GM12878 (cell line): ENCODE measurements at regions of chr15 and their contacts with region 1.

Region 1: GRCh38 chr15:59329570-59330350 is 42.9 kb downstream of the MYO1E start:
- DNase-seq: no peak
- ATAC-seq: no peak; the same call in 2 of the 3 replicates
- H3K4me3 ChIP-seq: no peak overlapping the region
- H3K27ac ChIP-seq: peak overlapping the region; percentile 48; the same call in 1 of the 2 replicates
- H3K4me1 ChIP-seq: peaks cover 80% of the 10 kb centered on the region
- H3K27me3 ChIP-seq: no peaks in the 10 kb centered on the region
- CTCF ChIP-seq: no peak
- EP300 ChIP-seq: no peak
- POLR2A ChIP-seq: no peak
- RAD21 ChIP-seq: no peak

Region 2: DNA sequence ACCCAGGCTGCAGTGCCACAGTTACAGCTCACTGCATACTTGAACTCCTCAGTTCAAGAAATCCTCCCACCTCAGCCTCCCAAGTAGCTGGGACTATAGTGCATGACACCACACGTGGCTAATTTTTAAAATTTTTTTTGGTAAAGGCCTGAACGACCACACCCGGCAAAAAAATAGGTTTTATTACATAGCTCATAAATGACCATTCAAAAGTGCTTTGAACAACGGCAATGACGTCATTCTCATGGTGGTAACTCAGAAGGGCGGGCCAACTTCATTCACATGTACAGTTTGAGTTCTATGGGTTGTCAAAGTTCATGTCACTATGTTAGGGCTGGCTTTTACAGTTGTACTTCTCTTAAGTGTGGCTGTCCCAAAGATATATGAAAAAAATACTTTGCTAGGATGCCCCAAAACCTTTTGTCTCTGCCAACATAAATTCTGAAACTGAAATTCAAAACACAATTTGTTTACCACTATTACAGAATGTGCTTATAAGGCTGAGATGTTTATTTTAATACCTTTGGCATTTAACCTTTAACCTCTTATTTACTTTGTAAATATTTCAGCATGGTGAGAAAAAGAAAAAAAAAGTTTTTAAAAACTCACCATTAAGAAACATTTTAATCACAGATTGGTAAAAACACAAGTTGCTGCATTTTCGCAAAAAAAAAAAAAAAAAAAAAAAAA is 36.7 kb after region 1 on chr15:
- CTCF ChIA-PET with region 1: no interaction called
- POLR2A ChIA-PET with region 1: no interaction called
- RAD21 ChIA-PET with region 1: interaction called, 4 read pairs
- SMC1A ChIA-PET with region 1: interaction called, 7 read pairs
- in situ Hi-C with region 1: no loop called
- intact Hi-C with region 1: loop called (anchors 1 kb)
- DNase-seq: no peak
- ATAC-seq: peak; percentile 10
- H3K4me3 ChIP-seq: peak overlapping the region; percentile 75; the same call in 1 of the 2 replicates
- H3K27ac ChIP-seq: no peak overlapping the region
- H3K4me1 ChIP-seq: peaks cover 10% of the 10 kb centered on the region
- H3K27me3 ChIP-seq: no peaks in the 10 kb centered on the region
- CTCF ChIP-seq: no peak
- EP300 ChIP-seq: no peak
- POLR2A ChIP-seq: no peak
- RAD21 ChIP-seq: no peak